ENCODE measurements at regions of chr16 and their contacts with region 1.

Region 1: DNA sequence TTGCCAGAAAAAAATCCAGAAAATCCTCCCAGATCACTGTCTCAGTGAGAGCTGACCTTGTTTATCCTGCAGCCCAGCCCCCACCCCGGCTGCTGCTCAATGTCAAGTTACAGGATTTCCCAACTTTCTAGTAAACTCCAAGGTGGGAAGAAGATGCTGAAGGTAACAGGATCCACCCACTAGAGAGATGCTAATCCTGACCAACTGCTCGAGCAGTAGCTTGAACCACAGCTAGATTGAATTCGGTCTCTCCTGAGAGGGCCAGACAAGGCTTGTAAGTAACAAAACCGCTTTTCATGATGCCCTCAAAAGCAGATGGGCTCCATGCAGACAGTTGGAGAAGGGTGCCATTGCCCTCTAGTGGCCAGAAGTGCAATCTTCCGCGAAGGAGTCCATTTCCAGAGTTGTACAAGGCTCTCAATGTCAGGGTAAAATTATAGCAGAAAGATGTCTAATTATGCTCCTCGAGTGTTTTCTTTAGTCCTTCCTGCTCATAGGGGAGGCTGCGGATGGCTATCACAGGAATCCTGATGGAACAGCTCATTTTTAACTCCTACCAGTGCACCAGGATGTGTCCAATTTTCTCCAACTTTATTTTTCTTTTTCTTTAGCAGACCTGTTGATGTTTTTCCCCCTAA is 3.9 kb downstream of the CDH11 start:
- DNase-seq: peak; percentile 75
- ATAC-seq: peak; percentile 9; the same call in 1 of the 2 replicates
- H3K4me3 ChIP-seq: peak overlapping the region; percentile 90
- H3K27ac ChIP-seq: no peak overlapping the region
- H3K4me1 ChIP-seq: peaks cover 22% of the 10 kb centered on the region
- H3K27me3 ChIP-seq: no peaks in the 10 kb centered on the region
- CTCF ChIP-seq: peak; percentile 89

Region 2: DNA sequence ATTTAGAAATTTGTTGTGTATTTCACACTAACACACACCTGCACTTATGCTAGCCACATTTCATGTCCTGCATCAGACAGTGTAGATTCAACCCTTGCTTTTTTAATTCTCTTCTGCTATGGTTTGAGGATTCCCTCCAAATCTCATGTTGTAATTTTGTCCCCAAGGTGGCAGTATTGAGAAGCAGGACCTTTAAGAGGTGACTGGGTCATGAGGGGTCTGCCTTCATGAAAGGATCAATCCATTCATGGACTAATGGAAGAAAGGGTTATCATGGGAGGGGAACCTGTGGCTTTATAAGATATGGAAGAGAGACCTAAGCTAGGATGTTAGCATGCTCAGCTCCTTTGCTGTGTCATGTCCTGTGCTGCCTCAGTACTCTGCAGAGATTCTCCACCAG is 1028.2 kb before region 1 on chr16:
- CTCF ChIA-PET with region 1: no interaction called
- POLR2A ChIA-PET with region 1: no interaction called
- intact Hi-C with region 1: loop called (anchors 5 kb)
- DNase-seq: peak; percentile 53
- ATAC-seq: peak; percentile 54
- H3K4me3 ChIP-seq: no peak overlapping the region
- H3K27ac ChIP-seq: no peak overlapping the region
- H3K4me1 ChIP-seq: peaks cover 14% of the 10 kb centered on the region
- H3K27me3 ChIP-seq: no peaks in the 10 kb centered on the region
- CTCF ChIP-seq: peak; percentile 81

Region 3: DNA sequence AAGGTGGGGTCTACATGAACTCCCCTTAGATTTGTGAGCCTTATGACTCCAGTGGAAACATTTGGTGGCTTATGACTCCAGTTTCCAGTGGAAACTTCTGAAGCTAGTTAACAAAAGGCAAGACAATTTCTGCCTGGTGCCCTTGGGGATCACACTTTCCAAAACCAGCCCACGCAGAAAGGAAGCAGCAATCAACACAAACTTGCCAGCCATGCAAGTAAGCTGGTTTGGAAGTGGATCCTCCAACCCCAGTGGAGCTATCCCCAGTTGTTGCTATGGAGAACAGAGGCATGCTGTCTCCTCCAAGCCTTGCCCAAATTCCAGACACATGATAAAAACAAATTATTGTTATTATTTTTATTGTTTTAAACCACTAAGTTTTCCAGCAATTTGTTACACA is 126.9 kb before region 1 on chr16:
- CTCF ChIA-PET with region 1: no interaction called
- POLR2A ChIA-PET with region 1: no interaction called
- intact Hi-C with region 1: loop called (anchors 10 kb)
- DNase-seq: no peak
- ATAC-seq: no peak
- H3K4me3 ChIP-seq: no peak overlapping the region
- H3K27ac ChIP-seq: no peak overlapping the region
- H3K4me1 ChIP-seq: no peaks in the 10 kb centered on the region
- H3K27me3 ChIP-seq: no peaks in the 10 kb centered on the region
- CTCF ChIP-seq: no peak

Region 4: DNA sequence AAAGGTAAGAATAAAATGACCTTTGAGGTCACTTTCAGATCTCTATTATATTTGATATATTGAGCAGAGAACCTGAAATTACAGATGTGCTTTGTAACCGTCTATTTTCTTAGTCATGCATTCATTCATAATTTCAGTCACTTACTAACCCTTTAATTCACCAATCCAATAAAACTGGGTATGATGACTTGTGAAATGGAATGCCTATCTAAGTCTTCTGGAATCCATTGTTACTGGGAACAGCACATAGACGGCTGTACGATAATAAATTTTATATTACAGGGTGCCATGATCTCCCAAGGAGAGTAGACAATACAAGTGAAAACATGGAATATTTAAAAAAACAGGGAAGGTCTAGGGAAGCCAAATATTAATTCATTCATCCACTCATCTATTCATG is 19.0 kb before region 1 on chr16:
- CTCF ChIA-PET with region 1: no interaction called
- POLR2A ChIA-PET with region 1: no interaction called
- intact Hi-C with region 1: no loop called
- DNase-seq: no peak
- ATAC-seq: no peak
- H3K4me3 ChIP-seq: no peak overlapping the region
- H3K27ac ChIP-seq: no peak overlapping the region
- H3K4me1 ChIP-seq: no peaks in the 10 kb centered on the region
- H3K27me3 ChIP-seq: no peaks in the 10 kb centered on the region
- CTCF ChIP-seq: no peak

Region 5: DNA sequence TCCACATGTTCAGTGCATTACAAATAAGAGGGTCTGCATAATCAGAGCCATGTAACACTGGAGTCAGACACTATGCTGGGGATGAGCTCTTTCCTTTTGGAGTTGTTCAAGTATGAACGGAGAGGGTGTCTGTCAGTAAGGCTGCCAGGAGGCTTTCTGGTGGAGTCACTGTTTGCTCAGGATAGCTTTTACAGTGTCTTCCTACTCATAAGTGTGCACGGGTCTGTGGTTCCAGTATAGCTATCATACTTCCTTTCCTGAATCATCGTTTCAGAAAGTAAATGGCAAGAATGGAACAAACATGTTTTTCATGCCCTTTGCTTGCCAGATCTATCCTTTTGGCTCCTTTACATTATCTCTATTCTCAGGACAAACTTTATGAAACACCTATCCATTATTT is 156.6 kb after region 1 on chr16:
- CTCF ChIA-PET with region 1: no interaction called
- POLR2A ChIA-PET with region 1: interaction called, 6 read pairs
- intact Hi-C with region 1: loop called (anchors 2 kb)
- DNase-seq: peak; percentile 83
- ATAC-seq: peak; percentile 98
- H3K4me3 ChIP-seq: no peak overlapping the region
- H3K27ac ChIP-seq: peak overlapping the region; percentile 95
- H3K4me1 ChIP-seq: peaks cover 20% of the 10 kb centered on the region
- H3K27me3 ChIP-seq: no peaks in the 10 kb centered on the region
- CTCF ChIP-seq: no peak

Region 6: GRCh38 chr16:65572156-65572555 is 454.2 kb after region 1 on chr16:
- CTCF ChIA-PET with region 1: no interaction called
- POLR2A ChIA-PET with region 1: no interaction called
- intact Hi-C with region 1: loop called (anchors 5 kb)
- DNase-seq: peak; percentile 72
- ATAC-seq: peak; percentile 96
- H3K4me3 ChIP-seq: no peak overlapping the region
- H3K27ac ChIP-seq: peak overlapping the region; percentile 25; the same call in 1 of the 2 replicates
- H3K4me1 ChIP-seq: peaks cover 15% of the 10 kb centered on the region
- H3K27me3 ChIP-seq: no peaks in the 10 kb centered on the region
- CTCF ChIP-seq: no peak

Region 7: DNA sequence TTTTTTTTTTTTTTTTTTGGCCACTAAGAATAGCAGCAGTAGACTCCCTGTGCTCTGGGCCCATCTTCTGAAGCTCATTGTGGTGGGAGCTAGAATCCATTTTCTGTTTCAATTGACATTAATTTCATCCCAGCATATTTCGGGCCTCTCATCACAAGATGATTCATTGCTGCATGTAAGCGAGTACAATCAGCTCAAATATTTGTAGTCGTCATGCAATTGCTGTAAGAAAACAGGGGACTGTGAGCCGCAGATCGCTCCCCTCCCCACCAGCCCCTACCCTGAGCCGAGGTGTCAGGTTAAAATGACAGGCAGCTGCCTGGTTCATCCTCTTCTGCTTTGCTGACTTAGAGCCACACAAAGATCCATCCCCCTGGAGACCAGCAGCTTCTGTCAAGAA is 889.8 kb after region 1 on chr16:
- CTCF ChIA-PET with region 1: no interaction called
- POLR2A ChIA-PET with region 1: no interaction called
- intact Hi-C with region 1: loop called (anchors 10 kb)
- DNase-seq: peak; percentile 71
- ATAC-seq: peak; percentile 66
- H3K4me3 ChIP-seq: 0 out of 2 replicates have a peak overlapping the region, but pooled peaks have one; percentile 17
- H3K27ac ChIP-seq: no peak overlapping the region; the same call in 1 of the 2 replicates
- H3K4me1 ChIP-seq: peaks cover 22% of the 10 kb centered on the region
- H3K27me3 ChIP-seq: no peaks in the 10 kb centered on the region
- CTCF ChIP-seq: no peak

Region 8: GRCh38 chr16:66247516-66248481 is 1129.9 kb after region 1 on chr16:
- CTCF ChIA-PET with region 1: no interaction called
- POLR2A ChIA-PET with region 1: no interaction called
- intact Hi-C with region 1: no loop called
- DNase-seq: peak; percentile 25
- ATAC-seq: peak; percentile 60
- H3K4me3 ChIP-seq: no peak overlapping the region
- H3K27ac ChIP-seq: no peak overlapping the region
- H3K4me1 ChIP-seq: peaks cover 12% of the 10 kb centered on the region; the same call in 1 of the 2 replicates
- H3K27me3 ChIP-seq: no peaks in the 10 kb centered on the region
- CTCF ChIP-seq: no peak